Naive thymus-derived CD8-positive, alpha-beta T cell (primary cell): ENCODE measurements at regions of chr11 and their contacts with region 1.

Region 1: GRCh38 chr11:10455637-10456487 is 798 bp downstream of the AMPD3 start:
- DNase-seq: peak; percentile 48 to 86 (median 66)
- ATAC-seq: peak; percentile 71 to 72
- H3K4me3 Mint-ChIP-seq: peak overlapping the region; percentile 85 to 93 (median 90)
- H3K27ac Mint-ChIP-seq: peak overlapping the region; percentile 88 to 99 (median 96)
- H3K4me1 Mint-ChIP-seq: peaks cover 40 to 91% (median 86%) of the 10 kb centered on the region in 4 donors
- H3K27me3 Mint-ChIP-seq: no peaks in the 10 kb centered on the region

Region 2: GRCh38 chr11:10413268-10413667 is 42.6 kb before region 1 on chr11:
- POLR2A ChIA-PET with region 1: interaction called, 10 read pairs
- DNase-seq: peak; percentile 12 to 80 (median 51)
- ATAC-seq: peak; percentile 89 to 93
- H3K4me3 Mint-ChIP-seq: peak overlapping the region in 1 of 10 donors; percentile 38
- H3K27ac Mint-ChIP-seq: peak overlapping the region in 2 of 10 donors; percentile 4 to 26
- H3K4me1 Mint-ChIP-seq: peaks cover 12 to 45% (median 38%) of the 10 kb centered on the region in 4 donors
- H3K27me3 Mint-ChIP-seq: peaks cover 0 to 4% (median 0%) of the 10 kb centered on the region in 5 donors

Region 3: DNA sequence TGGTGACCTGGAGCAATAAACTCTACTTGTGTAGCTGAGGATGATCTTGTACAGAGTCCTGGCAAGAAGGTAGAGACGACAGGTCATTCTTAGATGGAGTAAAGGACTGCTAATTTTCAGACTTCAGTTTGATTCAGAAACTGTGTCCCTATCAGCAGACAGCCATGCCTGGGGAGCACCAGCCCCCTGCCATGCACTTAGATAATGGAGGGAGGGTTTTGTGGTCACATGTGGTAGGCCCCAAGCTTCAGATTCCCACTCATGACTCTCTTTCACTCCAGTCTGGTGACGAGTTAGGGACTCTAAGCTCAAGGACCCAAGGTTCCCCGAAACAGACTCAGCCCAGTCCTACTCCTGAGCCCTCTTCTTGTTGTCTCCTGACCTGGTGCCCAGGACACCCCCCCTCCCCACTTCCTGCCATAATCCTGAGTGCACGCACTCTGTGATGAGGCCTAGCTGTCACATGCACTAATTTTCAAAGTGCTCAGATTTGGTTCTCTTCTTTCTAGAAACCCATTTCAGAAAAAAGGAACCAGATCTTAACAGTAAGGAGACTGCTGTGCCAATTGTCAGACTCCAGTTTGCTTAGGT is 11.0 kb before region 1 on chr11:
- POLR2A ChIA-PET with region 1: interaction called, 41 read pairs
- DNase-seq: peak in 2 of 10 donors; percentile 34 to 46
- ATAC-seq: peak; percentile 50 to 74
- H3K4me3 Mint-ChIP-seq: peak overlapping the region in 3 of 10 donors; percentile 15 to 39 (median 35)
- H3K27ac Mint-ChIP-seq: peak overlapping the region; percentile 46 to 87 (median 58)
- H3K4me1 Mint-ChIP-seq: peaks cover 15 to 59% (median 50%) of the 10 kb centered on the region in 4 donors
- H3K27me3 Mint-ChIP-seq: no peaks in the 10 kb centered on the region

Region 4: GRCh38 chr11:10540923-10541560 is 85.2 kb after region 1 on chr11 and contains the start of gene RNF141:
- POLR2A ChIA-PET with region 1: interaction called, 15 read pairs
- DNase-seq: peak; percentile 85 to 96 (median 94)
- ATAC-seq: peak; percentile 95
- H3K4me3 Mint-ChIP-seq: peak within 1 kb of the TSS; percentile 82 to 93 (median 90)
- H3K27ac Mint-ChIP-seq: peak within 1 kb of the TSS; percentile 81 to 98 (median 94)
- H3K4me1 Mint-ChIP-seq: peaks cover 8 to 58% (median 21%) of the 10 kb centered on the region in 4 donors
- H3K27me3 Mint-ChIP-seq: peaks cover 0 to 2% (median 0%) of the 10 kb centered on the region in 5 donors
- polyA plus RNA-seq, gene RNF141: 20.5 to 22.9 (median 22.8) TPM